RWPE1 (cell line): ENCODE measurements at regions of chr1 and their contacts with region 1.

Region 1: DNA sequence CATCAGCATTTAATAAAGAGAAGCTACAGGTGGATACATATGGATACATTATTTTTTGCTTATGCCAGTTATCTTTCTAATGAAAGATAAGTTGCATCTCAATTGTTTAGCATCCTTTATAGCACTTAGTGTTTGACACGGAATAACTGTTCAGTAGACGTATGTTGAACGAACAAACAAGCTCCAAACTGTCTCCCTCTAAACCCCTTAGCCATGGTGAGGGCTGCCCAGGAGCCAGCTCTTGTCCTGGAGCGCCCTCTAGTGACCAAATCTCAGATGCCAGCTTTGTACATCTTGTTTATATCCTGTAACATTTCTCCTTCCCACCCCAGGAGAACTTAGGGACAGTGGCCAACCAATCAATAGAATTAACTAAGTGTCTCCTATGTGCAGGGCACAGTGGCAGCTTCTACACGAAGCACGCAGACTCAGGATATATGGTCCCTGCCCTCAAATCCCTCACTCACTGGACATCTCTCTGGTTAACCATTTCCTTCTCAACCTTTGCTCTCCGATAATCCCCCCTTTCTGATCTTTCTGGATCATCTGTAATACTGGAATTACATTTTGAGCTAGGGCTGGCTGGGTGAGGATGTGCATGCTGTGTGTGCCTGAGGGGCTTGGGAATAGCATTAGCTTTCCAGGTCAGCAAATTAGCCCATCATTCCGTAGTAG is 22.9 kb downstream of the KCNA10 start:
- DNase-seq: peak; percentile 78
- H3K27ac ChIP-seq: no peak overlapping the region
- CTCF ChIP-seq: peak; percentile 93

Region 2: GRCh38 chr1:110203021-110203661 is 292.9 kb before region 1 on chr1:
- CTCF ChIA-PET with region 1: interaction called, 40 read pairs
- POLR2A ChIA-PET with region 1: no interaction called
- DNase-seq: peak; percentile 45
- H3K27ac ChIP-seq: no peak overlapping the region
- CTCF ChIP-seq: peak; percentile 84

Region 3: GRCh38 chr1:110312188-110313121 is 183.6 kb before region 1 on chr1:
- CTCF ChIA-PET with region 1: interaction called, 12 read pairs
- POLR2A ChIA-PET with region 1: no interaction called
- DNase-seq: peak; percentile 63
- H3K27ac ChIP-seq: no peak overlapping the region
- CTCF ChIP-seq: peak; percentile 80

Region 4: GRCh38 chr1:110412576-110412975 is 83.5 kb before region 1 on chr1:
- CTCF ChIA-PET with region 1: interaction called, 45 read pairs
- POLR2A ChIA-PET with region 1: no interaction called
- DNase-seq: peak; percentile 80
- H3K27ac ChIP-seq: no peak overlapping the region
- CTCF ChIP-seq: peak; percentile 76

Region 5: GRCh38 chr1:110477041-110477440 is 19.0 kb before region 1 on chr1:
- CTCF ChIA-PET with region 1: interaction called, 21 read pairs
- POLR2A ChIA-PET with region 1: no interaction called
- DNase-seq: peak; percentile 85
- H3K27ac ChIP-seq: peak overlapping the region; percentile 27; the same call in 1 of the 2 replicates
- CTCF ChIP-seq: no peak

Region 6: GRCh38 chr1:110770832-110771614 is 275.0 kb after region 1 on chr1:
- CTCF ChIA-PET with region 1: no interaction called
- POLR2A ChIA-PET with region 1: no interaction called
- DNase-seq: peak; percentile 54
- H3K27ac ChIP-seq: no peak overlapping the region
- CTCF ChIP-seq: no peak